Tibial artery (tissue), 4 donors: ENCODE measurements at regions of chr20 and their contacts with region 1.

Region 1: DNA sequence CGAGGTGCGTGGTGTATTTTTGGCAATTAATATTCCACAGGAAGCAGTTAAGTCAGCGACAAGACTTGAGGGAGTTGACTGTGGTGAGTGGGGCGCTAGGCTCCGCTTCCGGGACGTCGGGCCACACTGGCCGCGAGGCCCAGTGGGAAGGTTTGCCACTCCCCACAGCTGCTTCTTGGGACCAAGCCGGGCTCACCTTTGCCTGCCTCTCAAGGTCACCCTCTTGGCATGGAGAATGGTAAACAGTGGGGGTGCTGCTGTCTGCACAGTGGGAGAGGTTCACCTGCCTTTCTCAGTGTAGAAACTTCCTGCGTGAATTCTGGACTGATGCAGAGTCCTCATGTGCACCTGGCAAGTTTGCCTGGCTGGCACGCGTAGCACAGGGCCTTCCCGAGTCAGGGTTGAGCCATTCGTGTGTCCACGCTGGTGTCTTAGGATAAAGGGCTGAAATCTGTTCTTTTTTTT is 6.4 kb downstream of the OSBPL2 start:
- DNase-seq: no peak
- H3K4me3 ChIP-seq: no peak overlapping the region
- H3K27ac ChIP-seq: no peak overlapping the region
- H3K4me1 ChIP-seq: peaks cover 0 to 28% (median 9%) of the 10 kb centered on the region in 4 donors
- H3K27me3 ChIP-seq: no peaks in the 10 kb centered on the region
- CTCF ChIP-seq: no peak

Region 2: GRCh38 chr20:61297986-61298385 is 946.7 kb before region 1 on chr20:
- intact Hi-C with region 1: no loop called
- DNase-seq: no peak
- H3K4me3 ChIP-seq: no peak overlapping the region
- H3K27ac ChIP-seq: no peak overlapping the region
- H3K4me1 ChIP-seq: no peaks in the 10 kb centered on the region
- H3K27me3 ChIP-seq: peaks cover 0 to 21% of the 10 kb centered on the region in 2 donors
- CTCF ChIP-seq: no peak

Region 3: DNA sequence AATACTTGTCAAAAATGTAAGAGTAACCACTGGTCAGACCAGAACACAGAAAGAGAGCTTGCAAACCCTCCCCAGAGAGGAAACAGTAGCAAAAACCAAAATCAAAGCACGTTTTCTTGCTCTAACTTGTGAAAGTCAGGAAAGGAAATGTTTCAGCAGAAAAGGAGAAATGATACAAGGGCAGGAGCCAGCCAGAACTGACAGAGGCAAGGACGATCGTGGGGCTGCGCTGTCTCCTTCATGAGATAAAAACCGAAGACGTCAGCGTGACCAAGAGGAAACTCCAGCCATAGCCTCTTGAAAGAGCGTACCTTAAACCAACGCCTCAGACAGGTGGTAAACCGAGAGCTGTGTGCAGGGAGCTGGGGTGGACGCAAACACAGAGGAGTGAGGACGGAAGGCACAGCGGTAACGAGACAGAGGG is 95.0 kb after region 1 on chr20:
- intact Hi-C with region 1: no loop called
- DNase-seq: no peak
- H3K4me3 ChIP-seq: no peak overlapping the region
- H3K27ac ChIP-seq: no peak overlapping the region
- H3K4me1 ChIP-seq: no peaks in the 10 kb centered on the region
- H3K27me3 ChIP-seq: no peaks in the 10 kb centered on the region
- CTCF ChIP-seq: no peak

Region 4: DNA sequence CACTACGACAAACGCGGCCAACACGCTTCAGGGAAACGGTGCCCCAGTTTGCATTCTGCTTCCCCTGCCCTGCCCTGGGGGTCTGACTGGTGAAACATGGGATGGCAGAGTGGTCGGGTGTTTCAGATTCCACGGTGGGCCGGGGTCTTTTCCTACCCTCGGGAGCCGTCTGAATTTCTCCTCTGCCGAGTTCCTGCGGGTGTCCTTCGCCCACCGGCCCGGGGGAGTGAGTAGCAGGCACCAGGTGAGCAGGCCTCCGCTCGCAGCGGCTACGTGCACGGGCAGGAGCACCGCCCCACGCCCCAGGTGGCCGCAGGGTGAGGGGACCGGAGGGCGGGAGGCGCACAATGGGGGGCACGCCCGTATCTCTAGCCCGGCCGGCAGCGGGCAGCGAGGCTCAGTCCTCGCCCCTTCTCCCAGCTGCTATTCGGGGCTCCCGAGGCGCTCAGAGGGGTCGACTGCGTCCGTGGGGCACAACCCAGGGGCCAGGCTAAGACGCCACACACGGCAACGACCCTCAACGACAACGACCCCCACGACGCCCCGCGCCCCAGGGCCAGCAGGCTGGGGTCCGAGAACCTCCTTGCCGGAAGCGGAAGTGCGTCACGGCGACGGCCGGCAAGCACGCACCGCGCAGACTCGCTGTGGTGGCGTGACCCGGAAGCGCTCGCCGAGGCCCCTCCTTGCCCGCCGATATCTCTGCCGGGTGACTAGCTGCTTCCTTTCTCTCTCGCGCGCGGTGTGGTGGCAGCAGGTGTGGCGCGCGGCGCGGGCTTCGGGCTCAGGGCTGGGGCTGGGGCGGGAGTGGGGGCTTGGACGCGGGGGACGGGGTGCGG is 141.9 kb after region 1 on chr20 and contains the start of gene RPS21:
- intact Hi-C with region 1: loop called (anchors 2 kb)
- DNase-seq: peak; percentile 90 to 95
- H3K4me3 ChIP-seq: peak within 1 kb of the TSS; percentile 96 to 97
- H3K27ac ChIP-seq: peak within 1 kb of the TSS; percentile 97 to 98
- H3K4me1 ChIP-seq: peaks cover 0 to 34% (median 29%) of the 10 kb centered on the region in 4 donors
- H3K27me3 ChIP-seq: no peaks in the 10 kb centered on the region
- CTCF ChIP-seq: no peak